HCT116 (cell line): ENCODE measurements at regions of chr1 and their contacts with region 1.

Region 1: DNA sequence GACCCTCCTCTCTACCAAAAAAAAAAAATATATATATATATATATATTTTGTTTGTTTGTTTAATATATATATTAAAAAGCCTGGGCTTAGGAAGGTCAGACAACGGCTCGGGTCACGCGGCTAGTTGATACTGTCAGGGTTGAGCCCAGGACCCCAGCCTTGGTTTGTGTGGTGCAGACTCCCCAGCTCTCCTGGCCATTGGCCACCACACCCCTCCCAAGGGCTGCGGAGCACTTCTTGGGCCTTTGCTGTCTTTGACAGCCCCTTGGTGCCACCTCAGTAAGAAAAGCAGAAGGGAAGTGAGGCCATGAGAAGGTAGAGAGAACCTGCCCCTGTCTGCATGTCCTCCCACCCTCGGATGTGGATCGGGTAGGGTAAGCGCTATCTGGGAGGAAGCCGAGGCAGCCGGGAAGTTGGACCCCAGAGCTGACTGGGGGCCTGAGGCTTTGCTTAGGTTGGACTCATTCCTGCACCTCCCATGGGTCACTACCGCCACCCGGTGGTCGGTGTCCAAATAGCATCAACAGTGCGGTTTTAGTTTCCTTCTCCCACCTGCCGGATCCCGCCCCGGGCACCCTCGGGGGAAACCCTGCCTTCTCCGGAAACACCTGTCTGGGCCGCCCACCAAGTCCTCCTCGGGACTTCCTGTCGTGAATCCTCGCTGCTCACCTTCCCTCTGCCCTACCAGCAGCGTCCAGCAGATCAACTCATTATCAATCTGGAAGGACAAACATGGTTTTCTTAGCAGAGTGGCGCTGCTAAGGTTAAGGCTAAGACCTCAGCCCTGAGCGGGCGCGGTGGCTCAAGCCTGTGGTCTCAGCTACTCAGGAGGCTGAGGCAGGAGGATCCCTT is 29.8 kb upstream of the GNPAT start:
- DNase-seq: peak; percentile 67
- ATAC-seq: peak; percentile 94
- H3K4me3 ChIP-seq: peak overlapping the region; percentile 45 to 57
- H3K27ac ChIP-seq: 0 out of 2 replicates have a peak overlapping the region, but pooled peaks have one; percentile 6
- H3K4me1 ChIP-seq: peaks cover 4 to 13% of the 10 kb centered on the region in 2 experiments; a peak in 3 of 4 replicates
- H3K27me3 ChIP-seq: no peaks in the 10 kb centered on the region
- CTCF ChIP-seq: peak; percentile 83 to 93 (median 91)
- POLR2A ChIP-seq: no peak
- RAD21 ChIP-seq: peak; percentile 97

Region 2: DNA sequence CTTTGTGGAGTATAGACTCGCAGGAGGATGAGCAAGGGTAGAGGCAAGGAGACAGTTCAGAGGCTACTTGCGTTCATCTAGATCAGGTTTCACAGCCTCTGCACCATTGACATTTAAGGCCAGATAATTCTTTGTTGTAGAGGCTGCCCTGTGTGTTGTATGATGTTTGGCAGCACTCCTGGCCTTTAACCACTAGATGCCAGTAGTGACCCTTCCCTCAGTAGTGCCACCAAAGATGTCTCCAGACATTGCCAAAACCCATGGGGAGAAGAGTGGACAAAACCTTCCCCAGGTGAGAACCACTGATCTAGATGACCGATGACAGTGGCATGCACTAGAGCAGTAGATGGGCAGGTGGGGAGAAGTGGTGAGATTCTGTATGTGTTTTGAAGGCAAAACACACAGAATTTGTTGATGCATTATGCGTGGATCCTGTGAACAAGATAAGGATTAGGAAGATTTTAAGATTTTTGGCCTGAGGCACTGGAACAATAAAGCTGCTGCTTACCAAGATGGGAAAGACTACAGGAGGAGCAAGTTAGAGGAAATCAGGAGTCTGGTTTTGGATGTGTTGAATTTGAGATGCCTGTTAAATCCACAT is 578.9 kb before region 1 on chr1:
- CTCF ChIA-PET with region 1: no interaction called
- POLR2A ChIA-PET with region 1: no interaction called
- RAD21 ChIA-PET with region 1: no interaction called
- intact Hi-C with region 1: loop called (anchors 1 kb)
- DNase-seq: peak; percentile 52
- ATAC-seq: peak; percentile 95
- H3K4me3 ChIP-seq: no peak overlapping the region
- H3K27ac ChIP-seq: no peak overlapping the region
- H3K4me1 ChIP-seq: no peaks in the 10 kb centered on the region
- H3K27me3 ChIP-seq: peaks cover 4% of the 10 kb centered on the region; the same call in 1 of the 2 replicates
- CTCF ChIP-seq: peak; percentile 82 to 87 (median 83)
- POLR2A ChIP-seq: no peak
- RAD21 ChIP-seq: peak; percentile 92

Region 3: DNA sequence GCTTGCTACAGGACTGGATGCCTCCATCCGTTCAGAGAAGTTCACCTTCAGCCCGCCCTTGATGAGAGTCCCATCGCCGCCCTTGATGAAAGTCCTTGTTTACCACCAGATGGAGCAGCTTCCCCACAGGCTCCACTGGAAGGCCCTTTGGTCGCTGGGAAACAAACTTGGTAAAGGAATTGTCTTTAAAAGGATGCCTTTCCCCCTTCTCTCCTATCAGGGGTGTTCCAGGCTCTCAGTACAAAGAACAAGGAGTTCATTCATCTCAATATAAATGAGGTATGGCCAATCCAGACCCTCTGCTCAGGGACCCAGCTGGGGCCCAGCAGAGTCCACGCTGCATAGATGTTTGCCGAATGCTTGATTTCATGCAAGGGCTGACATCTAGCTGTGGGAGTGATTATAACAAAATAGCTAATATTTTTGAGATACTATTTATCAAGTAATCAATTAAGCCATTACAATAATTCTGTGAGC is 413.3 kb before region 1 on chr1:
- CTCF ChIA-PET with region 1: interaction called, 7 read pairs
- POLR2A ChIA-PET with region 1: no interaction called
- RAD21 ChIA-PET with region 1: interaction called, 3 read pairs
- intact Hi-C with region 1: loop called (anchors 1 kb)
- DNase-seq: peak; percentile 41
- ATAC-seq: peak; percentile 89
- H3K4me3 ChIP-seq: no peak overlapping the region
- H3K27ac ChIP-seq: no peak overlapping the region
- H3K4me1 ChIP-seq: no peaks in the 10 kb centered on the region
- H3K27me3 ChIP-seq: no peaks in the 10 kb centered on the region
- CTCF ChIP-seq: peak; percentile 59 to 93 (median 67)
- POLR2A ChIP-seq: no peak
- RAD21 ChIP-seq: peak; percentile 93

Region 4: GRCh38 chr1:230917284-230918135 is 293.7 kb before region 1 on chr1:
- CTCF ChIA-PET with region 1: interaction called, 3 read pairs
- POLR2A ChIA-PET with region 1: no interaction called
- RAD21 ChIA-PET with region 1: no interaction called
- intact Hi-C with region 1: loop called (anchors 1 kb)
- DNase-seq: peak; percentile 62
- ATAC-seq: peak; percentile 88
- H3K4me3 ChIP-seq: no peak overlapping the region
- H3K27ac ChIP-seq: no peak overlapping the region
- H3K4me1 ChIP-seq: peaks cover 0 to 6% of the 10 kb centered on the region in 2 experiments; a peak in 1 of 4 replicates
- H3K27me3 ChIP-seq: no peaks in the 10 kb centered on the region
- CTCF ChIP-seq: peak; percentile 55 to 79 (median 71); a peak in 5 of 6 replicates
- POLR2A ChIP-seq: no peak
- RAD21 ChIP-seq: peak; percentile 67

Region 5: DNA sequence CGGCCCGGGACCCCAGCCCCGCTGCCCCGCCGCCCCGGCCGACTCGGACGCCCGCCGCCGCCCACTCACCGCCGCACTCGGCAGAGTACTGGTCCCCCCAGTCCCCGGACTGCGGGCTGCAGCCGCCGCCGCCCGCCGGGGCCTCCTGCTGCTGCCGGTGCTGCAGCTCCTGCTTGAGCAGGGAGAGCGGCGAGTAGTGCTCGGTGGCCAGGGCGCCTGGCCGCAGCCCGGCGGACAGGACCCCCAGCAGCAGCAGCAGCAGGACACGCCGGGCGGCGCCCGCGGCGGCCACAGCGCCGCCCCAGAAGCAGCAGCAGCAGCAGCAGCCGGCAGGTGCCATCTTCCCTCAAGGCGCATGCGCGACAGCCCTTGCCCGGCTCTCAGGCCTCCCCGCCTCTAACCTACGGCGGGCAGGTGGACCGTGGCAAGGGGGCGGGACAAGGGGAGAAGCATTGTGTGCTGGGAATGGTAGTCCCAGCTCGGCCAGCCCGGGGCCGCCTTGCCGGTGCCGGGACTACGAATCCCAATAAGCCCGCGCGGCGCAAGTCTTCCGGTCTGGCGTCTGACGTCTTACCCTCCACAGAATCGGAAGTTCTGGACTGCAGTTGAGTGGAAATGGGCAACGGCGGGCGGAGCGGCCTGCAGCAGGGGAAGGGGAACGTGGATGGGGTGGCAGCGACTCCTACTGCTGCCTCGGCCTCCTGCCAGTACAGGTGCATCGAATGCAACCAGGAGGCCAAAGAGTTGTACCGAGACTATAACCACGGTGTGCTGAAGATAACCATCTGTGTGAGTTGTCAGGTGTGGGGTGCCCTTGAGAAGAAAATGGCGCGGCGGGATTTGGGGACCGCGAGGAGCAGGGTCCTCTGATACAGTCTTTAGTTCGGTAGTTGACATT is 232.5 kb before region 1 on chr1 and contains the starts of genes ARV1 and TTC13:
- CTCF ChIA-PET with region 1: no interaction called
- POLR2A ChIA-PET with region 1: no interaction called
- RAD21 ChIA-PET with region 1: no interaction called
- intact Hi-C with region 1: loop called (anchors 5 kb)
- DNase-seq: peak; percentile 97
- ATAC-seq: peak; percentile 98
- H3K4me3 ChIP-seq: peak within 1 kb of the TSS; percentile 87 to 88
- H3K27ac ChIP-seq: peak within 1 kb of the TSS; percentile 61
- H3K4me1 ChIP-seq: peaks cover 7 to 13% of the 10 kb centered on the region in 2 experiments; a peak in 2 of 4 replicates
- H3K27me3 ChIP-seq: no peaks in the 10 kb centered on the region
- CTCF ChIP-seq: peak; percentile 55 to 65 (median 63); a peak in 5 of 6 replicates
- POLR2A ChIP-seq: no peak
- RAD21 ChIP-seq: peak; percentile 80
- total RNA-seq, gene ARV1: 4.0 TPM
- total RNA-seq, gene TTC13: 12.3 TPM

Region 6: DNA sequence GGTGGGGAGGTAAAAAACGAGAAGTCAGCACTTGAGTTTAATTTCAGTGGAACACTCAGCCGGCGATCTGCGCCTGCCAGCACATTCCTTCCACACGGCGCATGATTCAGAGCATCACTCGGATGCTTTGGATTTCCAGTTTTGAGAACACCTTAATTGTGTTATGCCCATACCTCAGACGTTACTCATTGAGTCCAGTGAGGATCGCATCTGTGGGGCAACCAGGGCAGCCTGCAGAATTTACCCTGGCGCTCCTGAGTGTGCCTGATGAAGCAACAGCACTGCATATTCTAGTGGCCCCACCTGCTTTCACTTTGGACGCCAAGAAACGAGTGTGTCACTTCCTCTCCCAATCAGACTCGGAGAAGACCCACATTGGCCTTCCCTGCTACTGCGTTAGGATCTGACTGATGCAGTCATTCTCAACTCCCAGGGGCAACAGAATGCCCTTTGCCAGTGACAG is 191.1 kb before region 1 on chr1:
- CTCF ChIA-PET with region 1: interaction called, 9 read pairs
- POLR2A ChIA-PET with region 1: no interaction called
- RAD21 ChIA-PET with region 1: no interaction called
- intact Hi-C with region 1: loop called (anchors 1 kb)
- DNase-seq: no peak
- ATAC-seq: no peak
- H3K4me3 ChIP-seq: no peak overlapping the region
- H3K27ac ChIP-seq: no peak overlapping the region
- H3K4me1 ChIP-seq: no peaks in the 10 kb centered on the region
- H3K27me3 ChIP-seq: no peaks in the 10 kb centered on the region
- CTCF ChIP-seq: 0 out of 6 replicates have a peak, but pooled peaks of 2 of the 3 experiments have one; percentile 9 to 12
- POLR2A ChIP-seq: no peak
- RAD21 ChIP-seq: no peak